Prostate gland (tissue), 2 donors: ENCODE measurements at regions of chr2 and their contacts with region 1.

Region 1: GRCh38 chr2:61538200-61538919 is at the start of gene XPO1:
- DNase-seq: peak; percentile 100
- H3K4me3 ChIP-seq: peak within 1 kb of the TSS; percentile 64 to 88
- H3K27ac ChIP-seq: peak within 1 kb of the TSS; percentile 99 to 100
- H3K4me1 ChIP-seq: no peaks in the 10 kb centered on the region
- H3K27me3 ChIP-seq: no peaks in the 10 kb centered on the region
- CTCF ChIP-seq: peak in 1 of 4 experiments; percentile 28
- POLR2A ChIP-seq: peak; percentile 98
- total RNA-seq, gene XPO1: 65.3 to 160 TPM

Region 2: DNA sequence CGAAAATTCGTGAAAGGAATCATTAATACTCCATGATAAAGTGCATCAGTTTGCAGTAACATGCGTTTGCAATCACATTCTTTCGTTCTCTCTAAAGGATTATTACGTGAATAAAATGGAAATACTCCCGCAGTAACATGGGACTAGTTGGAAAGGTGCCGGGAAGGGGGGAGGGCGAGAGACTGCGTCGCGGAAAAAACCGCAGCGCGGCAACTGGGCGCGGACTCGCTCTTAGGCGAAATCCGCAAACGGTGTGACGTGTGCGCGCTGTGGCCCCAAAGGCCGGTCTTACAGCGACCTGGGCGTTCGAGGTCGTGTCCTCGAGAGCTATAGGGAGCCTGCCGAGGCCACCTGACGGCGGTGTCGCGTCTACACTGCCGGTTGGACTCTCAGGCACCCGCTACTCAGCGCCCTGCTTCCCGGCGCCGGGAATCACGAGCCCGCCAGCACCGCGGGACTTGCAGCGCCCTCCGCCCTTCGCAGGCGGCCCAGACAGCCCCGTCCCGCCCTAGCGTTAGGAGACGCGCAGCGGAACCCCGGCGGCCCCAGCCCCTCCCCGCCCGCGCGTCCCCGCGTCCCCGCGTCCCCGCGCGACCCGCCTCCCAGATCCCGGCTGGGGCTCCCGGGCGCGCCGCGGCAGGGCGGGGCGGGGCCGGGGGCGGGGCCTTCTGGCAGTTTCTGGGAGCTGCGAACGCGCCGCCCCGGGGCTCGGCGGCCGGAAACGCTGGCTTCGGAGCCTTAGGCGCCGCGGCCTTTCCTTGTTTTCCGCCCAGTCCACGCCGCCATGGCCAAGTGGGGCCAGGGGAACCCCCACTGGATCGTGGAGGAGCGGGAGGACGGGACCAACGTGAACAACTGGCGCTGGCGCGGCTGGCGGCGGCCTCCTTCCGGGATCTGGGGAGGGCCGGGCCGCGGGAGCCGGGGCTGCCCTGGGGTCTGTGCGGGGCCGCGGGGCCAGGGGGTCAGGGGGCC is 361.3 kb before region 1 on chr2:
- intact Hi-C with region 1: loop called (anchors 1 kb)
- DNase-seq: peak; percentile 89
- H3K4me3 ChIP-seq: peak overlapping the region; percentile 88 to 93
- H3K27ac ChIP-seq: peak overlapping the region; percentile 99 to 100
- H3K4me1 ChIP-seq: peaks cover 11% of the 10 kb centered on the region
- H3K27me3 ChIP-seq: no peaks in the 10 kb centered on the region
- CTCF ChIP-seq: peak in 3 of 4 experiments; percentile 12 to 34 (median 27)
- POLR2A ChIP-seq: peak; percentile 92

Region 3: GRCh38 chr2:61470965-61471904 is 67.1 kb before region 1 on chr2 and contains the start of gene USP34:
- intact Hi-C with region 1: loop called (anchors 2 kb)
- DNase-seq: peak; percentile 93
- H3K4me3 ChIP-seq: peak within 1 kb of the TSS; percentile 55 to 96
- H3K27ac ChIP-seq: peak within 1 kb of the TSS; percentile 95 to 99
- H3K4me1 ChIP-seq: no peaks in the 10 kb centered on the region
- H3K27me3 ChIP-seq: no peaks in the 10 kb centered on the region
- CTCF ChIP-seq: peak in 2 of 4 experiments; percentile 16 to 32
- POLR2A ChIP-seq: peak; percentile 88
- total RNA-seq, gene USP34: 94.1 to 206 TPM

Region 4: GRCh38 chr2:61575447-61575859 is 37.1 kb after region 1 on chr2:
- intact Hi-C with region 1: no loop called
- DNase-seq: no peak
- H3K4me3 ChIP-seq: no peak overlapping the region
- H3K27ac ChIP-seq: no peak overlapping the region
- H3K4me1 ChIP-seq: no peaks in the 10 kb centered on the region
- H3K27me3 ChIP-seq: no peaks in the 10 kb centered on the region
- CTCF ChIP-seq: no peak
- POLR2A ChIP-seq: no peak

Region 5: DNA sequence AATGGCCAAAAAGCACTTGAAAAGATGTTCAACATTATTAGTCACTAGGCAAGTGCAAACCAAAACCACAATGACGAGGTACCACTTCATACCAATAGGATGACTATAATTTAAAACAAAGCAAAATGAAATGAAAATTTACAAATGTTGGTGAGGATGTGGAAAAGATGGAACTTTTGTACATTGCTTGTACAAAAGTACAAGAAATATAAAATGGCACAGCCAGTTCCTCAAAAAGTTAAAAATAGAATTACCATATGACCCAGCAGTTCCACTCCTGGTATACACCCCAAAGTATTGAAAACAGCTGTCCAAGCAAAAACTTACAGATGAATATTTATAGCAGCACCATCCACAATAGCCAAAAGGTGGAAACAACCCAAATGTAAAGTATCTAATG is 107.6 kb after region 1 on chr2:
- intact Hi-C with region 1: no loop called
- DNase-seq: no peak
- H3K4me3 ChIP-seq: no peak overlapping the region
- H3K27ac ChIP-seq: no peak overlapping the region
- H3K4me1 ChIP-seq: no peaks in the 10 kb centered on the region
- H3K27me3 ChIP-seq: no peaks in the 10 kb centered on the region
- CTCF ChIP-seq: no peak
- POLR2A ChIP-seq: no peak